A673 (cell line): ENCODE measurements at regions of chr5 and their contacts with region 1.

Region 1: GRCh38 chr5:109146591-109146990 is 263.2 kb downstream of the PJA2 start:
- DNase-seq: no peak
- H3K4me3 ChIP-seq: no peak overlapping the region
- H3K27ac ChIP-seq: no peak overlapping the region
- H3K4me1 ChIP-seq: no peaks in the 10 kb centered on the region
- H3K27me3 ChIP-seq: no peaks in the 10 kb centered on the region
- CTCF ChIP-seq: no peak

Region 2: GRCh38 chr5:109125755-109126429 is 20.7 kb before region 1 on chr5:
- CTCF ChIA-PET with region 1: interaction called, 3 read pairs
- POLR2A ChIA-PET with region 1: no interaction called
- intact Hi-C with region 1: loop called (anchors 1 kb)
- DNase-seq: peak; percentile 60
- H3K4me3 ChIP-seq: no peak overlapping the region
- H3K27ac ChIP-seq: no peak overlapping the region
- H3K4me1 ChIP-seq: peaks cover 14% of the 10 kb centered on the region
- H3K27me3 ChIP-seq: no peaks in the 10 kb centered on the region
- CTCF ChIP-seq: no peak

Region 3: GRCh38 chr5:109885205-109885604 is 738.6 kb after region 1 on chr5:
- CTCF ChIA-PET with region 1: no interaction called
- POLR2A ChIA-PET with region 1: no interaction called
- intact Hi-C with region 1: no loop called
- DNase-seq: no peak
- H3K4me3 ChIP-seq: no peak overlapping the region
- H3K27ac ChIP-seq: no peak overlapping the region
- H3K4me1 ChIP-seq: no peaks in the 10 kb centered on the region
- H3K27me3 ChIP-seq: no peaks in the 10 kb centered on the region
- CTCF ChIP-seq: no peak